ENCODE measurements at regions of chr3 and their contacts with region 1.

Region 1: DNA sequence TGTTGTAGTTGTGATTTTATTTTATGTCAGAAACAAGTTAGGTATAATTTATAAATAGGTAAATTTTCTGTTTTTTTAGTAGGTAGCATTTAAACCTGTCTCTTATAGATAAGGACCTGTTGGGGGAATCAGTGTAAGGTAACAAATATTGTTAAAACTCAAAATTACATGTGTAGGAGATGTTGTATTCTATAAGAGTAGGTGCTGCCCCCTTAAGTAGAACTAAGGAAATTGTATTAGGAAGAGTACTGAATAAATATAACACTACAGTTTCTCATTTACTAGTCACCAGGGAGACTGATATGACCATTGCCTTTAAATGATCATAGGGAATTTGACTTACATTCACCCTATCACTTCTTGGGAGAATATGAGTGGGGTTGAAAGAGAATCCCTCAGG is 31.2 kb downstream of the SLC25A36 start:
- DNase-seq: no peak
- ATAC-seq: peak in 3 of 4 donors; percentile 34 to 46 (median 45)
- H3K4me3 ChIP-seq: no peak overlapping the region
- H3K27ac ChIP-seq: no peak overlapping the region
- H3K4me1 ChIP-seq: peaks cover 0 to 6% (median 0%) of the 10 kb centered on the region in 12 donors
- H3K27me3 ChIP-seq: no peaks in the 10 kb centered on the region
- CTCF ChIP-seq: peak in 10 of 12 donors; percentile 10 to 51 (median 32)
- POLR2A ChIP-seq: no peak

Region 2: DNA sequence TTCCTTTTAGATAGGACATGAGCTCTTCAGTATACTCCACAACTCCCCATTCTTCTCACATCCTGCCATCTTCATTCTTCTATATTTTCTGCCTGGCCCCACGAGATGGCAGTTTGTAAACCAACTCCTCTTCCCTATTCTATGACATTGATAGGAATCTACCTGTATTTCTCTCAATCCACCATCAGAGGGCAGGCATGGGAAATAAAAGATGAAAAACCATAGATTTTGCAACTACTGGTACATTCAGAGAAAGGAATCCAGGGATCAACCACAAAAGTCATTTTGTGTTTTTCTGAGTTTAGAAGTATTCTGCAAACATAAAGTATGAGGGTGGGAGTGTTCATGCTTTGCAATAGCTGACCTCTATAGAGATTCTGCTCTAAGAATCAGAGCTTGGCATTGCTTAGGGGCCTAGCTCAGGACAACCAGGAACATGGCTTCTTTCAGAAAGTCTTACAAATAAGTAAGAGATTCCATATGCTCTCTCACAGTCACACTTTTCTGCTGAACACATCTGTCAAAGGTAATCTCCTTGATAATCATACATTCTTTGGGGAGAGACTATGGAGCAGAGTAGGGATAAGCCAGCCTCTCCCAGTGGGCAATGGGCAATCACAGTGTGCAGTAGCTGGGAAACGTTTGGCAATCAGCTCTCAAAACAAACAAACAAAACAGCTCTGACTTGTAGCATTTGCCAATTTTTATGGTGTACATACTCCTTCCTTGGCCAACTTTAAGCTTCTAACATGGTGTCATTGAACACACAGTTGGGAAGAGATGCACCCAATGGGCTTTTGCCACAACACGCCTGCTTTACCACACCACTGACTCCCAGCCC is 74.3 kb before region 1 on chr3:
- intact Hi-C with region 1: loop called in 6 of 10 experiments (anchors 5 kb)
- DNase-seq: no peak
- ATAC-seq: peak; percentile 23 to 53 (median 36)
- H3K4me3 ChIP-seq: no peak overlapping the region
- H3K27ac ChIP-seq: no peak overlapping the region
- H3K4me1 ChIP-seq: peaks cover 0 to 5% (median 0%) of the 10 kb centered on the region in 12 donors
- H3K27me3 ChIP-seq: no peaks in the 10 kb centered on the region
- CTCF ChIP-seq: peak; percentile 33 to 63 (median 48)
- POLR2A ChIP-seq: no peak

Region 3: DNA sequence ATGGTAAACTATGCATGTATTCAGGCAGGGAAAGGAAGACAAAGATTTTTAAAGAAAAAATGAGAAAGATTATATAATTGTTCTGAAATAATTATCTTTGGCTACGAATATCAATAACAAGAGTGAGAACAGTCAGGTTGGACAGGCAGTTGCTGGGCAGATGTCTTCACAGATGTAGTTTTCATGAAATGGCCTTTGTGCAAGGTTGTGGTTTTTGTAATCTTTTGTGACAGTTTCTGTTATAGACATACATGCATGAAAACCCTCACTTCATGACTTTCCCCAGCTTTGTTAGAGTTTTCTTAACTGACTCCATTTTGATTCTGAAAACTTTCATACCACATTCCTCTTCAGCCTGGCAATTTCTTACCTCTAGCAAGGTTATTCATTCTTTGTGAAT is 66.0 kb before region 1 on chr3:
- intact Hi-C with region 1: loop called in 1 of 10 experiments (anchors 5 kb)
- DNase-seq: no peak
- ATAC-seq: no peak
- H3K4me3 ChIP-seq: no peak overlapping the region
- H3K27ac ChIP-seq: no peak overlapping the region
- H3K4me1 ChIP-seq: peaks cover 0 to 10% (median 0%) of the 10 kb centered on the region in 12 donors
- H3K27me3 ChIP-seq: no peaks in the 10 kb centered on the region
- CTCF ChIP-seq: no peak
- POLR2A ChIP-seq: no peak

Region 4: DNA sequence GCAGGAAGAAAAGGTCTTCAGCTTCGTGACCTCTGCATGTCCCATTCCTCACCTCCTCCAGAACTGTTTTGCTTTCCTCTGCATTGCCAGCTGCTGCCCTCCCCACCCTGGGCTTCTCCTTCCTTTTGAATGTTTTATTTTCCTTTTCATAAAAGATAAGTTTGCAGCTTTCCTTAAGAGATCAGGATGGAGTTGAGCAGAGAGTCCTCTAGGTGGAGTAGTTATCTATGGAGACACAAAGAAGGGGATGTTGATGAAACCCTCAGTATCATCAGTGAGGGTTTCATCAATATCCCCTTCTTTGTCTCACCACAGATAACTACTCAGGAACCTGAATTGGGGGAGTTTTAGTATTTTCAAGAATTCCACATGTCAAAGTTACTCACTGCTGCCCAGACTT is 50.2 kb before region 1 on chr3:
- intact Hi-C with region 1: loop called in 2 of 10 experiments (anchors 5 to 10 kb)
- DNase-seq: no peak
- ATAC-seq: no peak
- H3K4me3 ChIP-seq: no peak overlapping the region
- H3K27ac ChIP-seq: no peak overlapping the region
- H3K4me1 ChIP-seq: peaks cover 0 to 21% (median 0%) of the 10 kb centered on the region in 12 donors
- H3K27me3 ChIP-seq: peaks cover 0 to under 1% (median 0%) of the 10 kb centered on the region in 9 donors
- CTCF ChIP-seq: peak in 9 of 12 donors; percentile 14 to 41 (median 31)
- POLR2A ChIP-seq: no peak

Region 5: DNA sequence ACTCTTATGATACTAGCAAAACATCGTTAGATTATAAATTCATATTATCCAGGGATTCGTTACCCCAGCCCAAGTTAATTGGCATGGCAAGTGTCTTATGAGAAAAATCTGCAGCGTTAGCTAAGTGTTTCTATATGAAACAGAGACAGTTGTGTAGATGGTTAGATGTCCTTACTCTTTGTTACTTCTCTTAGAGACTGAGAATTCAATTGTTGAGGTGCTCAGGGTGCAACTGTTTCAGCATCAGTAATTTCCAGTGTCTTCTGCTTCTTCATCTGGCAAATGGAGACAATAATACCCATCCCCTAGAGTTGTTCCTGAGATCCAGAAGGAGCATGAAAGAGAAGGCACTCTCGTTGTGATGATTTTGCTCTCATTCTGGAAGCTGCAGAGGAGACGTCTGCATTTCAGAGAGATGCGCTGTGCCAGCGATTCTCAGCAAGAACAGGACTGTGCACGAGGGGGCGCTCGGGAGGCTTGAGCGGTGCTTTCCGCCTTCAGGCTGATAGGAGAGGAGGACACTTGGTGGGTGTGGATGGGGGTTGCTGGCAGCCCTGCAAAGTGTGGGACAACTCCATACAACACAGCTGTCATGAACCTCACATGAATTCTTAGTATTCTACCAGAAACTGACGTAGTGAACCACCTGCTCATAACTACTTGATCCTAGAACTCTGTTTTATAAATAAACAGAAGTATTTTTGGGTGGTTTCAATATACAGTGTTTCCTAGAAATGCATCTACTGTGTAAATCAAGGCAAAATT is 38.6 kb after region 1 on chr3:
- intact Hi-C with region 1: no loop called
- DNase-seq: peak; percentile 76 to 89 (median 82)
- ATAC-seq: peak; percentile 62 to 84 (median 76)
- H3K4me3 ChIP-seq: no peak overlapping the region
- H3K27ac ChIP-seq: no peak overlapping the region
- H3K4me1 ChIP-seq: peaks cover 0 to 6% (median 1%) of the 10 kb centered on the region in 12 donors
- H3K27me3 ChIP-seq: no peaks in the 10 kb centered on the region
- CTCF ChIP-seq: peak; percentile 57 to 87 (median 80)
- POLR2A ChIP-seq: no peak

Region 6: GRCh38 chr3:141076797-141077571 is 104.2 kb after region 1 on chr3:
- intact Hi-C with region 1: no loop called
- DNase-seq: peak; percentile 56 to 75 (median 68)
- ATAC-seq: peak; percentile 55 to 81 (median 68)
- H3K4me3 ChIP-seq: peak overlapping the region in 9 of 12 donors; percentile 32 to 52 (median 41)
- H3K27ac ChIP-seq: peak overlapping the region in 11 of 12 donors; percentile 62 to 83 (median 75)
- H3K4me1 ChIP-seq: peaks cover 0 to 31% (median 23%) of the 10 kb centered on the region in 12 donors
- H3K27me3 ChIP-seq: no peaks in the 10 kb centered on the region
- CTCF ChIP-seq: peak in 1 of 12 donors; percentile 7
- POLR2A ChIP-seq: no peak

Region 7: DNA sequence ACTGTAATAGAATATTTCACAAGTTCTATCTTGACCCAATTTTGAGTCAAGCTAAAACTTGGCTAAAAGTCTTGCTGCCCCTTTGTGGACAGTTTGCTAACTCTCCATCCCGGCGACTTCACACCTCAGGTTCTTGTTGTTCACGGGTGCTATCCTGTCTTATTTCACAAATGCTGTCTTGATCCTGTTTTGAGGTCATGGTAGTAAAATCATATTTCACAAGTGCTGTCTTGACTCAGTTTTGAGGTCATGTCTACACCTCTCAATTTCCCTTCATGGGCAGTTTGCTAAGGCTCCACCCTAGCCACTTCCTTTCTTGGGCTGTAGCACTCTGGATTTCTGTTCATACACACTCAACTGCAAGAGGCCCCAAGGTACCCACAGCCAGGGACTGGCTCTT is 1297.6 kb after region 1 on chr3:
- intact Hi-C with region 1: no loop called
- DNase-seq: no peak
- ATAC-seq: peak in 2 of 4 donors; percentile 41 to 64
- H3K4me3 ChIP-seq: no peak overlapping the region
- H3K27ac ChIP-seq: peak overlapping the region in 1 of 12 donors; percentile 54
- H3K4me1 ChIP-seq: peaks cover 0 to 18% (median 0%) of the 10 kb centered on the region in 12 donors
- H3K27me3 ChIP-seq: no peaks in the 10 kb centered on the region
- CTCF ChIP-seq: no peak
- POLR2A ChIP-seq: no peak

Measured in heart left ventricle (tissue), 16 donors.